T-cell (primary cell): ENCODE measurements at regions of chr11 and their contacts with region 1.

Region 1: GRCh38 chr11:74112877-74113276 is 57.9 kb downstream of the C2CD3 start:
- DNase-seq: no peak
- ATAC-seq: no peak
- H3K4me3 ChIP-seq: no peak overlapping the region
- H3K4me3 Mint-ChIP-seq: no peak overlapping the region
- H3K27ac ChIP-seq: no peak overlapping the region
- H3K27ac Mint-ChIP-seq: no peak overlapping the region
- H3K4me1 ChIP-seq: no peaks in the 10 kb centered on the region
- H3K4me1 Mint-ChIP-seq: no peaks in the 10 kb centered on the region
- H3K27me3 ChIP-seq: no peaks in the 10 kb centered on the region
- H3K27me3 Mint-ChIP-seq: no peaks in the 10 kb centered on the region

Region 2: GRCh38 chr11:74044538-74044937 is 68.3 kb before region 1 on chr11:
- CTCF ChIA-PET with region 1: no interaction called
- POLR2A ChIA-PET with region 1: interaction called in 1 of 2 experiments, 10 read pairs
- DNase-seq: no peak
- ATAC-seq: no peak
- H3K4me3 ChIP-seq: no peak overlapping the region
- H3K4me3 Mint-ChIP-seq: no peak overlapping the region
- H3K27ac ChIP-seq: no peak overlapping the region
- H3K27ac Mint-ChIP-seq: no peak overlapping the region
- H3K4me1 ChIP-seq: no peaks in the 10 kb centered on the region
- H3K4me1 Mint-ChIP-seq: peaks cover 0 to 5% (median 1%) of the 10 kb centered on the region in 3 donors
- H3K27me3 ChIP-seq: no peaks in the 10 kb centered on the region
- H3K27me3 Mint-ChIP-seq: no peaks in the 10 kb centered on the region